Esophagus muscularis mucosa (tissue), 4 donors: ENCODE measurements at regions of chr5 and their contacts with region 1.

Region 1: GRCh38 chr5:96601811-96602244 is 60.3 kb upstream of the CAST start:
- DNase-seq: no peak
- H3K4me3 ChIP-seq: no peak overlapping the region
- H3K27ac ChIP-seq: no peak overlapping the region
- H3K4me1 ChIP-seq: peaks cover 0 to 5% (median 0%) of the 10 kb centered on the region in 4 donors
- H3K27me3 ChIP-seq: no peaks in the 10 kb centered on the region
- CTCF ChIP-seq: peak; percentile 81 to 88 (median 83)
- EP300 ChIP-seq: no peak
- POLR2A ChIP-seq: no peak

Region 2: DNA sequence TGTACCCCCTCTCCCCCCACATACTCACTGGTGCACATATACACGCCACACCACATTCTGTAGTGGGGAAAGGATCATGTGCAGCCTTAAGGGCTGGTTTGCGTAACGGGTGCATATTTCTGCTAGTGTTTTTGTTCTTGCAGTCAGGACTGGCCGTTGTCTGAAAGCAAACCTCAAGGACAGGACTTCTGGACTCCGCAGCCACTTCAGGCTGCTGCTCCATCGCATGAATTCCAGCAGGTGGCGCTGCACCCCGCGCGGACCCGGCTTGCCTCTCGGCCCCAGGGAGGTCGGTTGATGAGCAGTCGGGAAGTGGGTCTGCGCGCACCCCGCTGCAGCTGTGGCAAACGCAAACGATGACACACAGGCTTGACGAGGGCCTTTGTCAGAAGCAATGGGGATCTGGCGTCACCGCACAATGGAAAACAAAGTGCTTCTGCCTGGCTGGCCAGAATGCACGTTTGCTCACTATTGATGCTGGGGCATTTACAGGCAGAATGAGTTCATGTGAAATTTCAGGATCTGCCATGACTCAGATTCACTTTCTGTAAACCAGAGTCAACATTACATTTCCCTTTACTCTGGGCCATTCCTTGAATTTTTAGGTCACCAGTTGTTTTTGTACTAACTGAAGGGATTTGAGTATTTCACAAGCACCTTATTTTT is 743.0 kb before region 1 on chr5:
- intact Hi-C with region 1: loop called (anchors 5 kb)
- DNase-seq: peak; percentile 98
- H3K4me3 ChIP-seq: peak overlapping the region; percentile 37 to 55 (median 44)
- H3K27ac ChIP-seq: peak overlapping the region; percentile 82 to 88 (median 84)
- H3K4me1 ChIP-seq: peaks cover 48 to 75% (median 59%) of the 10 kb centered on the region in 4 donors
- H3K27me3 ChIP-seq: no peaks in the 10 kb centered on the region
- CTCF ChIP-seq: peak in 2 of 3 experiments; percentile 98 to 99
- EP300 ChIP-seq: peak; percentile 82
- POLR2A ChIP-seq: no peak

Region 3: DNA sequence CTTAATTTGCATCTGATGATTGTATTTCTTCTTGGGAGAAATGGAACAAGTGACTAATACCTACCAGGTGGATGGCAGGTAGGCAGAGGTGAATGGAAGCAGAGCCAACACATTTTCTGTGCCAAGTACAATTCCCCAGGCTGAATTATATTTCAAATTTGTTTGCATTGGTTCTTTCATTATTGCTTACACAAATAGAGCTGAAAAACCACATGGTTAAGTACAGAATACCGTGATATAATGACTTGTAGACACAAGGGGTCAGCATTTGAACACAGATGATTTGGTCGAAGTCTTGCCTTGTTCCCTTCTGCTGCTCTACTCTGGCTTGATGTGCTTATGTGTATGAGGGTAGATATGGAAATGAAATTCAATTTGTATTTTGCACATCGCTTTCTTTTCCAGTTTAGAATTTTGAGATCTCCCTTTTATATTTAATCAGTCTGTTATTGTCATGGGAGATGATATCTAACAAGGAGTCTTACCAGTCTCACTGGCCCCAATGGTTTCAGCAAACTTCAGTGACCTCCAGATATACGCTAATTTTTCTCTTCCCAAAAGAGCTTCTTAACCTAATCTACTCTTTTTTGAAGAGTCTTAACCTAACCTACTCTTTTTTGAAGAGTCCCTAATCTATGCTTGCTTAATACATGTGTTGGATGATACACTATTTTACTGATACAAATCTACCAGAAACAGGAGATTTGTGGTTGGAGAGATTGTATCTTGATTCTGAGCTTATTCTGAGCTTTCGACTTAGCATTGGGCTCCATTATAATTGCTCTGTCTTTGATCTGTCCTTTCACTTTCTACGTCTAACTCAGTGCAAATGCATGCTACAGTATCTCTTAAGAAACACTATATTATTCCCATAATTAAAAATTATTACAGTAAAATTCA is 256.9 kb before region 1 on chr5:
- intact Hi-C with region 1: loop called (anchors 2 kb)
- DNase-seq: no peak
- H3K4me3 ChIP-seq: no peak overlapping the region
- H3K27ac ChIP-seq: no peak overlapping the region
- H3K4me1 ChIP-seq: peaks cover 0 to 5% (median 0%) of the 10 kb centered on the region in 4 donors
- H3K27me3 ChIP-seq: no peaks in the 10 kb centered on the region
- CTCF ChIP-seq: peak; percentile 49 to 71 (median 57)
- EP300 ChIP-seq: no peak
- POLR2A ChIP-seq: no peak

Region 4: GRCh38 chr5:96536991-96537785 is 64.6 kb before region 1 on chr5:
- intact Hi-C with region 1: no loop called
- DNase-seq: no peak
- H3K4me3 ChIP-seq: no peak overlapping the region
- H3K27ac ChIP-seq: no peak overlapping the region
- H3K4me1 ChIP-seq: no peaks in the 10 kb centered on the region
- H3K27me3 ChIP-seq: no peaks in the 10 kb centered on the region
- CTCF ChIP-seq: no peak
- EP300 ChIP-seq: no peak
- POLR2A ChIP-seq: no peak